Colonic mucosa (tissue), 4 donors: ENCODE measurements at regions of chr6 and their contacts with region 1.

Region 1: DNA sequence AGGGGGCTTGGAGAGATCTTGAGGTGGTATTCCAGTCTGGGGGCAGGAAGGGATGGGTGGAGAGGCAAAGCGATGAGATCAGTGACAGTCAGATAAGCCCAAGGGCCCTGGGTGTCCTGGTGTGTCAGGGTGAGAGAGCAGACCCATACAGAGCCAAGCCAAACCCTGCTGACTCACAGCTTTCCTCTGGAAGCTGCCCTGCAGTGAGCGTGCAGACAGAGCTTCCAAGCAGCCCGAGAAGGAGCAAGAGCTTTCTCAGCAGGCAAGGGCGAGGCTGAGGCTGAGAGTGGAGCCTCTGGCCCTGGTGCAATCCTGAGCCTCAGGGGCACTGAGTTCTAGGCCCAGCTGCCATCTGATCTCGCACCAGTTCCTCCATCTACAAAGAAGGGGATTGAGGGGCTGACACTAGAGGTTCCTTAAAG is 91.1 kb upstream of the HIVEP1 start:
- DNase-seq: peak; percentile 64
- H3K4me3 ChIP-seq: no peak overlapping the region
- H3K27ac ChIP-seq: peak overlapping the region; percentile 9
- H3K4me1 ChIP-seq: peaks cover 4% of the 10 kb centered on the region
- H3K27me3 ChIP-seq: no peaks in the 10 kb centered on the region
- CTCF ChIP-seq: no peak

Region 2: GRCh38 chr6:11700118-11700718 is 220.8 kb before region 1 on chr6:
- intact Hi-C with region 1: loop called (anchors 10 kb)
- DNase-seq: no peak
- H3K4me3 ChIP-seq: no peak overlapping the region
- H3K27ac ChIP-seq: no peak overlapping the region
- H3K4me1 ChIP-seq: no peaks in the 10 kb centered on the region
- H3K27me3 ChIP-seq: no peaks in the 10 kb centered on the region
- CTCF ChIP-seq: peak; percentile 36

Region 3: DNA sequence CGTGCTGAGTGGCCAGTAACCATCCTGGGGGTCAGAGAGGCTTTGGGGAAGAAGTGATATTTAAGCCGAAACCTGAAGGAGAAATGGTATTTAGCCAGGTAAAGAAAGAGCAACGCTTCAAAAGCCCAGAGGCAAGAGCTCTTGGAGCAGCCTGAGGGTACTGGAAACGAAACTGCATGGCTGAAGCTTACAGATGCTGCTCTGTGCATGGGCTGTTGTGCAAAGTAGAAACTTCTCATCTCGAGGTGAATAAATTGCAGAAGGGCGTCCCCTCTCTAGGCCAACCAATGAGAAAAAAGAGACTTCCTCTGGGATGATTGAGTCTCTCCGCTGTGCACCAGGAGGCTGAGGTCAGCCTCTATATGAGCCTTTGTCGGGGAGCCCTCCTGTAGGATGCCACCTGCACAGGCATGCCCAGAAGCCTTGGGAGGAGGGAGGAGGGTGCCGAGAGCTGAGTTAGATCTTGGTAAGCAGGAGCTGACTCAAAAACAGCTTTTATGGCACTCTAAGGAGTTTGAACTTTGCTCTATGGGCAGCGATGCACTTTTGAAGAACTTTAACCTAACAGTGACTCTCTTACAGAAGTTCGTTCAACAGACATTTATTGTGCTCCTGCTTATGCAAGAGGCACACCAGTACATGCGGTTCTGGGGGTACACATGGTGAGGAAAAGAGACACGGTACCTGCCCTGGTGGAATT is 307.6 kb after region 1 on chr6:
- intact Hi-C with region 1: no loop called
- DNase-seq: peak; percentile 79
- H3K4me3 ChIP-seq: no peak overlapping the region
- H3K27ac ChIP-seq: peak overlapping the region; percentile 19
- H3K4me1 ChIP-seq: no peaks in the 10 kb centered on the region
- H3K27me3 ChIP-seq: no peaks in the 10 kb centered on the region
- CTCF ChIP-seq: no peak